ENCODE measurements at regions of chr5 and their contacts with region 1.

Region 1: DNA sequence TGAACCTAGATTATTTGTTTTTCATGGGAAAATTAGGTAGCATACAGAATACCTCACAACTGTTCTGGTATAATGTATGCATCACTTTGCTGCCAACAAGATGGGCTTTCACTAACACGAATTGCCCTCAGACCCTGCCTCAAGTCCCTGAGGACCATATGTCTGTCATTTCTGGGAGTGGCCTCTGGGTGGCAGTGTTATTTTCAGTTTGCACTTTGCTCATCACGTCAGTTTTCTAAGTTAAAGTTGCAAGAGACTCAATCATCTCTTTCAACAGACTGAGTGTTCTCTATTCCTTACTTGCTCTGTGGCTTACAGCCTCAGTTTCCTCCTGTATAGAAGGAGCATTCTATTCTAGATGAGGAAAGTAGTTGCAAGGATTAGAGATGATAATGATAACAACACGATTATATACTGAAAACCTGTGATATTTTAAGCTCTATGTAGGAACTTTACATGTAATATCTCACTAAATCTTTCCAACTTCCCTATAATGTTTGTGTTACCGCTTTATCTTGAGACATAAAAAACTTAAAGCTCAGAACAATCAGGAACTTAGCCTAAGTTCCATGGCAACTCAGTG is 55.7 kb downstream of the TSSK1B start:
- DNase-seq: peak in 1 of 2 donors; percentile 25
- ATAC-seq: peak; percentile 42 to 75 (median 60)
- H3K4me3 ChIP-seq: no peak overlapping the region
- H3K27ac ChIP-seq: no peak overlapping the region
- H3K4me1 ChIP-seq: no peaks in the 10 kb centered on the region
- H3K27me3 ChIP-seq: no peaks in the 10 kb centered on the region
- CTCF ChIP-seq: peak; percentile 74

Region 2: DNA sequence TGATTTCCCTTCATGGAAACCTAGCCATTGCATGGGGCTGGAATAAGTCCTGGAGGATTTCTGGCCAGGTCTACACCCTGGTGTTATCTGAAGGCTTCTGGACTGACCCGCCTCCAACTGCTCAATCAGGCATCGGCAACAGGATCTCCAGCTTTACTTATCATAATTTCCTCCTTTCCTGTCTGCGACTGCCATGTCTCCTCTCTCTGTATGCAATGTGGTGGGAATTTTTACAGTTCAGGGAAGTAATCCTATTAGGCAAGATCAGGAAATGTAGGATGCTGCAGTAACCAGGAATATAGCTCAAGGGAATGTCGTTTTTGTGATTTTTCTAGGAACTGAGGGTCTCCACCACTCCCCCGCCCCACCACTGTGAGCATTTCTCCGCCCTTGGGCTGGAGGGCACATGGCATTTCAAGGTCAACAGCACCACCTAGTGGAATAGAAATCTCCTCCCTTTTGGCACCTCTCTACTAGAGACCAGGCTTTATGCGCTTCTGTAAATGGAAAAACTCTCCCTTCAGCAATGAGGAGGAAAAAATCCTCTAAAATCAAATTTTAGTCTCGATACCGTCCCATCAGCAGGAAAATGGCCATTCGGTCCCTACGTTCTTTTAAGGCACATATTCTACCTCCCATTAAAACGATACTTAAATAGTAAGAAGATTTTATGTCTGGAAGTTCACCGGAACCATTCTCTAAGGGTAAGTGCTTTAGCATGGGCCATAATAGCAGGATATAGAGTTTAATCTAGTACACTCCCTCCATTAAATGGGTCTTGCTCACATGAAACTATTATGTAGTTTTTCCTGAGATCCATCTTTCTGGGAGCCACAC is 227.5 kb after region 1 on chr5:
- intact Hi-C with region 1: loop called in 1 of 2 experiments (anchors 5 kb)
- DNase-seq: no peak
- ATAC-seq: peak; percentile 73 to 88 (median 80)
- H3K4me3 ChIP-seq: no peak overlapping the region
- H3K27ac ChIP-seq: no peak overlapping the region
- H3K4me1 ChIP-seq: no peaks in the 10 kb centered on the region
- H3K27me3 ChIP-seq: no peaks in the 10 kb centered on the region
- CTCF ChIP-seq: peak; percentile 72